ENCODE measurements at regions of chr1 and their contacts with region 1.

Region 1: DNA sequence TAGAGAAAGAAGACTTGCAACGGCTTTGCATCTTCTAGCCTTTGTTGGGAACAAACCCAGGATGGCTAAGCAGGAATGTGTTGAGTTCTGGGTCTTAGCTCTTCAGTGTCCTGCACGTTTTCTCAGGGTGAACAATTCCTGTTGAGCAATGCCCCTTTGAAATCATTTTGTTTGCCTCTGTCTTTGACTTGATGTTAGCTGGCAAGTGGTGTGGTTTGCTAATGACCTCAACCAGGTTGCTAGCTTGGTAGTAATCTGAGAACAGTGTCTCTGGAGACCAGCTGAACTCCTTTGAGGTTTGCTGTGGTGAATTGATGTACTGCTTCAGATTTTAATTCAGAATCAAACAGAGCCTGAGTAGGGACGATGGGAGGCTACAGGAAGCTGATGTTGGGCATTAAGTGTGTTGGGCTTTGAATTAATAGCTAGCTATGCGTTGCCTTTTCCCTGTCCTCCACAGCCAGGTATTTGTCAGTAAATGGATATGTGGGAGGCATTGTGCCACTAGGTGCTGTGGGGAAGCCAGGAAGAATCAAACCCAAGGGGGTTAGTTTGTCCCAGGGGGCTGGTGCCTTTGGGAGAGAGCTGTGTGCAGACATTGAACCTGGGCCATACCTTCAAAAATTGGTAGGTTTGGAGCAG is 23.3 kb upstream of the SRSF10 start:
- DNase-seq: peak; percentile 37 to 88
- H3K4me3 ChIP-seq: no peak overlapping the region
- H3K27ac ChIP-seq: no peak overlapping the region
- H3K4me1 ChIP-seq: peaks cover 18% of the 10 kb centered on the region
- H3K27me3 ChIP-seq: no peaks in the 10 kb centered on the region
- CTCF ChIP-seq: no peak

Region 2: DNA sequence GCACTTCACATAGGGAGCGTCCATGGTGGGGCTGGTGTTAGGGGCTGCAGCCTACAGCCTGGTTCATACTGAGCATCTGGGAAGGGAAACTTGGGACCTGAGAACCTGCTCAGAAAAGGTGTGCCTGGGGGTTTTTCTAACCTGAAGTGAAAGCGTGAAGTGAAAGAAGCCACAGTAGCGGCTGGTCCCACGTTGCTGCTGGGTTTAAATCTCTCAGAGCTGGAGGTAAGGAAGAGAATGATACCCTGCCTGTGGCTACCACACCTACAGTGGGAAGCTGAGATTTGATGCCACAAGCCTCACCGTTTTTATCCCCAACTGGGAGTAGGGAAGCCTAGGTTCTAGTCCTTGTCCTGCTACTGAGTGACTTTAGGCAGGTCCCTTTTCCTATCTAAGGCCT is 114.4 kb before region 1 on chr1:
- CTCF ChIA-PET with region 1: no interaction called
- POLR2A ChIA-PET with region 1: no interaction called
- intact Hi-C with region 1: no loop called
- DNase-seq: no peak
- H3K4me3 ChIP-seq: no peak overlapping the region
- H3K27ac ChIP-seq: no peak overlapping the region
- H3K4me1 ChIP-seq: no peaks in the 10 kb centered on the region
- H3K27me3 ChIP-seq: no peaks in the 10 kb centered on the region
- CTCF ChIP-seq: no peak

Region 3: GRCh38 chr1:24036088-24036487 is 32.6 kb after region 1 on chr1:
- CTCF ChIA-PET with region 1: interaction called, 12 read pairs
- POLR2A ChIA-PET with region 1: no interaction called
- intact Hi-C with region 1: no loop called
- DNase-seq: no peak
- H3K4me3 ChIP-seq: no peak overlapping the region
- H3K27ac ChIP-seq: no peak overlapping the region
- H3K4me1 ChIP-seq: no peaks in the 10 kb centered on the region
- H3K27me3 ChIP-seq: no peaks in the 10 kb centered on the region
- CTCF ChIP-seq: no peak